ENCODE measurements at regions of chr2 and their contacts with region 1.

Region 1: GRCh38 chr2:129092956-129093355 is 774.3 kb upstream of the HS6ST1 start:
- DNase-seq: no peak
- ATAC-seq: no peak
- H3K4me3 ChIP-seq: no peak overlapping the region
- H3K4me3 Mint-ChIP-seq: no peak overlapping the region
- H3K27ac ChIP-seq: no peak overlapping the region
- H3K27ac Mint-ChIP-seq: no peak overlapping the region
- H3K4me1 ChIP-seq: no peaks in the 10 kb centered on the region
- H3K4me1 Mint-ChIP-seq: no peaks in the 10 kb centered on the region
- H3K27me3 ChIP-seq: no peaks in the 10 kb centered on the region
- H3K27me3 Mint-ChIP-seq: peaks cover 0 to 3% (median 0%) of the 10 kb centered on the region in 5 donors

Region 2: DNA sequence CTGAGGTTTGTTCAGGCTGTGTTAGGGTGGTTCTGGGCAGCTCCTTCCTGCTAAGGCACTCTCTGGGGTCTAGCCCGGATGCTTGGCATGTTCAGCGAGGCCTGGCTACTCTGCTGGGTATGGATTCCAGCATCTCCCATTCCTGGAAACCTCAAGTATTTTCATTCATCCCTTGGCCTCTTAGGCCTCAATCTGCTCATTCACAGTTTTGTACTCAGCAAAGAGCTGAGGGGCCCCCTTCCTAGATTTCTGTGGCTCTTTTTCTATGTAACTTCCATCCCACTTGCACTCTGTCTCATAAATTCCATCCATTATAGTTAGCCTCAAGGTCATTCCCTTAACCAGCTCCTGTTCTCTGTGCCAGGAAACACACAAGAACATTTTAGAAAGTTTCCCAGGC is 24.5 kb after region 1 on chr2:
- CTCF ChIA-PET with region 1: no interaction called
- POLR2A ChIA-PET with region 1: no interaction called
- intact Hi-C with region 1: loop called in 1 of 2 experiments (anchors 1 kb)
- DNase-seq: no peak
- ATAC-seq: no peak
- H3K4me3 ChIP-seq: no peak overlapping the region
- H3K4me3 Mint-ChIP-seq: no peak overlapping the region
- H3K27ac ChIP-seq: no peak overlapping the region
- H3K27ac Mint-ChIP-seq: no peak overlapping the region
- H3K4me1 ChIP-seq: no peaks in the 10 kb centered on the region
- H3K4me1 Mint-ChIP-seq: no peaks in the 10 kb centered on the region
- H3K27me3 ChIP-seq: no peaks in the 10 kb centered on the region
- H3K27me3 Mint-ChIP-seq: no peaks in the 10 kb centered on the region

Region 3: GRCh38 chr2:129318581-129319421 is 225.8 kb after region 1 on chr2:
- CTCF ChIA-PET with region 1: no interaction called
- POLR2A ChIA-PET with region 1: no interaction called
- intact Hi-C with region 1: no loop called
- DNase-seq: no peak
- ATAC-seq: no peak
- H3K4me3 ChIP-seq: no peak overlapping the region
- H3K4me3 Mint-ChIP-seq: no peak overlapping the region
- H3K27ac ChIP-seq: no peak overlapping the region
- H3K27ac Mint-ChIP-seq: no peak overlapping the region
- H3K4me1 ChIP-seq: no peaks in the 10 kb centered on the region
- H3K4me1 Mint-ChIP-seq: no peaks in the 10 kb centered on the region
- H3K27me3 ChIP-seq: no peaks in the 10 kb centered on the region
- H3K27me3 Mint-ChIP-seq: no peaks in the 10 kb centered on the region